HepG2 (cell line): ENCODE measurements at regions of chr6 and their contacts with region 1.

Region 1: DNA sequence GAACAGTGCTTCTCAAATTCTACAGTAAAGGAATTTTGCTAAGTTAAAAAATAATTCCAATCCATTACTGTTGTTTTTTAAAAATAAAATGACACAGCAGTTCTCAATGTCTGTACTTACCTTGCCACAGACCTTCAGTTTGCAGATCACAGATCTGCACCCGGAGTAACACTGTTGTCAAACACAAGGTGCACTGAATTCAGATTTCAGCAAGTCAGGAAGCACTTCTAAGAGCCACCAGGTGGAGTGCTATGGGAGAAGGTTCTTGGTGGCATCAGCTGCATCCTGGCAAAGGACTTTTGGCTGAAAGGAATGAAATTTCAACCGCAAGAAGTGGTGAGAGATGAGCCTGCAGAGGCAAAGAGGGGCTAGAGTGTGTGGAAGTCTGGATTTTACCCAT is 17.4 kb downstream of the RSPH4A start:
- DNase-seq: peak; percentile 78
- ATAC-seq: peak; percentile 64
- H3K4me3 ChIP-seq: no peak overlapping the region
- H3K27ac ChIP-seq: peak overlapping the region; percentile 83
- H3K4me1 ChIP-seq: peaks cover 51% of the 10 kb centered on the region
- H3K27me3 ChIP-seq: no peaks in the 10 kb centered on the region
- CTCF ChIP-seq: peak; percentile 78
- EP300 ChIP-seq: no peak
- POLR2A ChIP-seq: no peak
- RAD21 ChIP-seq: no peak

Region 2: GRCh38 chr6:116570856-116571682 is 62.6 kb before region 1 on chr6 and contains the start of gene RWDD1:
- CTCF ChIA-PET with region 1: no interaction called
- POLR2A ChIA-PET with region 1: interaction called, 14 read pairs
- in situ Hi-C with region 1: no loop called
- intact Hi-C with region 1: loop called (anchors 2 kb)
- DNase-seq: peak; percentile 99
- ATAC-seq: peak; percentile 94
- H3K4me3 ChIP-seq: peak within 1 kb of the TSS; percentile 89 to 96 (median 92)
- H3K27ac ChIP-seq: peak within 1 kb of the TSS; percentile 90
- H3K4me1 ChIP-seq: peaks cover 35% of the 10 kb centered on the region
- H3K27me3 ChIP-seq: no peaks in the 10 kb centered on the region; a peak in 1 of 5 replicates
- CTCF ChIP-seq: no peak; the same call in 1 of the 2 replicates
- EP300 ChIP-seq: peak; percentile 35 to 43; a peak in 3 of 4 replicates
- POLR2A ChIP-seq: peak; percentile 91 to 94
- RAD21 ChIP-seq: peak; percentile 39
- total RNA-seq, gene RWDD1: 67.1 and 90.5 TPM in 2 replicates

Region 3: GRCh38 chr6:116615937-116616736 is 17.5 kb before region 1 on chr6 and contains the start of gene RSPH4A:
- CTCF ChIA-PET with region 1: no interaction called
- POLR2A ChIA-PET with region 1: interaction called, 3 read pairs
- in situ Hi-C with region 1: no loop called
- intact Hi-C with region 1: loop called (anchors 2 kb)
- DNase-seq: peak; percentile 78
- ATAC-seq: peak; percentile 98
- H3K4me3 ChIP-seq: peak within 1 kb of the TSS; percentile 47 to 66 (median 55)
- H3K27ac ChIP-seq: no peak within 1 kb of the TSS
- H3K4me1 ChIP-seq: no peaks in the 10 kb centered on the region
- H3K27me3 ChIP-seq: no peaks in the 10 kb centered on the region; a peak in 1 of 5 replicates
- CTCF ChIP-seq: peak; percentile 70
- EP300 ChIP-seq: no peak
- POLR2A ChIP-seq: no peak
- RAD21 ChIP-seq: no peak
- total RNA-seq, gene RSPH4A: 0.14 and 0.40 TPM in 2 replicates

Region 4: DNA sequence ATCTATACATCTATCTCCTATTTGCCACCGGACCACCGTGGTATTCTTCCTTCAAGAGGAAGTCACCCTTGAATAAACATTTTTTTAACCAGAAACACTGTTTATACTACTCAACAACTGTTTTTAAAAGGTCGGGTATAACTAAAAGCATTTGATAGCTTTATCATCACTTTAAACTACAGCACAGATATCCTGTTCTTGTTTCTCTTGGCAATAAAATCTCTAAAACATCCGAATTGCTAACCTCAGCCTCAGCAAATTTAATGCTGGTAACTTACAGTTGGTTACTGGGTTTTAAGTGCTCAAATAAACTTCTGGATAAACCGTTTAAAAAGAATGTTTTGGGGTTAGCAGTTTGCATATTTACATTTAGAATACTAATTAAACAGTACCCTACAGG is 14.5 kb after region 1 on chr6:
- CTCF ChIA-PET with region 1: interaction called, 10 read pairs
- POLR2A ChIA-PET with region 1: no interaction called
- in situ Hi-C with region 1: no loop called
- intact Hi-C with region 1: loop called (anchors 2 kb)
- DNase-seq: no peak
- ATAC-seq: no peak
- H3K4me3 ChIP-seq: no peak overlapping the region
- H3K27ac ChIP-seq: no peak overlapping the region
- H3K4me1 ChIP-seq: no peaks in the 10 kb centered on the region
- H3K27me3 ChIP-seq: no peaks in the 10 kb centered on the region
- CTCF ChIP-seq: no peak
- EP300 ChIP-seq: no peak
- POLR2A ChIP-seq: no peak
- RAD21 ChIP-seq: no peak

Region 5: GRCh38 chr6:116667623-116668022 is 33.9 kb after region 1 on chr6:
- CTCF ChIA-PET with region 1: no interaction called
- POLR2A ChIA-PET with region 1: no interaction called
- in situ Hi-C with region 1: no loop called
- intact Hi-C with region 1: loop called (anchors 5 kb)
- DNase-seq: no peak
- ATAC-seq: no peak
- H3K4me3 ChIP-seq: peak overlapping the region; percentile 91 to 100 (median 94)
- H3K27ac ChIP-seq: peak overlapping the region; percentile 66
- H3K4me1 ChIP-seq: peaks cover 41% of the 10 kb centered on the region
- H3K27me3 ChIP-seq: peaks cover 2 to 13% of the 10 kb centered on the region in 2 experiments; a peak in 3 of 5 replicates
- CTCF ChIP-seq: no peak
- EP300 ChIP-seq: no peak
- POLR2A ChIP-seq: no peak
- RAD21 ChIP-seq: no peak

Region 6: DNA sequence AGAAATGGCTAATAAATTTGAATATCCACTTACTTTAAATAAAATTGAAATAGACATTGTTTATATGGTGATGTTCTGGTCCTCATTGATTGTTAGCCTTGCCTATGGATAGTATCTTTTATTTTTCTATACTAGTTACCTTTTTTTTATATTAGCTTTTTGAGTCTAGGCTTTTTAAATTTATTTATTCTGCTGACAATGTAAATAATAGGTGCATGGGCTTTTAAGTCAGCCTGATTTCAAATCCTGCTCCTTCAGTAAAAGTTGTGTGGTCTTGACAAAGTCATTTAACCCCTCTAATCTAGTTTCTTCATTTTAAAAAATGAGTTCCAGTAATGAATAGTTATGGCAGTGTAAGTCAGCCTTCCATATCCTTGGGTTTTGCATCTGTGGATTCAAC is 93.3 kb after region 1 on chr6:
- CTCF ChIA-PET with region 1: no interaction called
- POLR2A ChIA-PET with region 1: no interaction called
- in situ Hi-C with region 1: no loop called
- intact Hi-C with region 1: no loop called
- DNase-seq: no peak
- ATAC-seq: no peak
- H3K4me3 ChIP-seq: no peak overlapping the region
- H3K27ac ChIP-seq: no peak overlapping the region
- H3K4me1 ChIP-seq: no peaks in the 10 kb centered on the region
- H3K27me3 ChIP-seq: no peaks in the 10 kb centered on the region
- CTCF ChIP-seq: no peak
- EP300 ChIP-seq: no peak
- POLR2A ChIP-seq: no peak
- RAD21 ChIP-seq: no peak